Posterior vena cava (tissue), 2 donors: ENCODE measurements at regions of chr20 and their contacts with region 1.

Region 1: DNA sequence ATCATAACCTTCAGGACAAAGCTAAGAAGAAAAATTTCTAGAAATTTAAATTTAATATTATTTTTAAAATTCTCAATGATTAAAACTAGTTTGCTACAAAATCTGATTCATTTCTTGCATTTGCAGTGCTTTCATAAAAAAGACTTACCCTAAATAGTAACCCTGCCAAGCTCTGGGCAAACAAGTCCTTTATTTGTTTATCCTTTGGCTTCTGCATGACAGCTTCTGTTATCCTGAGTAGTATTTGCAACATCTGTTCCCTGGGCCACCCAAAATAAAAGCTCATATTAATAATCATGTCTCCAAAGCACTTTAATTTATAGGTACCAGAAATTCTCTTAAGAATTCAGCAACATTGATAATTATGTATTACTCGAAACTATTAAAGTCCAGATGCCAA is 101.3 kb downstream of the RALGAPA2 start:
- DNase-seq: no peak

Region 2: DNA sequence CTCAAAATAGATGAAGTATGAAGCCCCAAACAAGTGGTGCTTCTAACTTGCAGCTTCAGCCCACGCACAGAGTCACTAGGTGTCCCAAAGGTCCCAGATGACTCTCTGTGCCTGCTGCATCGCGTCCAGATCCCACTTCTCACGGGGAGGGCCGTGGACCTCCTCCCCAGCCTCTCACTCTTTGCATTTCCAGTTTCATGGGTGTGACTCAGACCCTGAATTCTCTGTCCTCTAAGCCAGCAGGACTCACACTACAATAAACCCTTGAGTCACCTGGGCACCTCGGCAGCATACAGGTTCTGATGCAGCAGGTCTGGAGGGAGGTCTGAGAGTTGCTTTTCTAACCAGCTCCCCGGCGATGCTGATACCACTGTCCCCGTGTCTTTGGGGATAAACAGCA is 967.1 kb before region 1 on chr20:
- intact Hi-C with region 1: no loop called
- DNase-seq: no peak

Region 3: DNA sequence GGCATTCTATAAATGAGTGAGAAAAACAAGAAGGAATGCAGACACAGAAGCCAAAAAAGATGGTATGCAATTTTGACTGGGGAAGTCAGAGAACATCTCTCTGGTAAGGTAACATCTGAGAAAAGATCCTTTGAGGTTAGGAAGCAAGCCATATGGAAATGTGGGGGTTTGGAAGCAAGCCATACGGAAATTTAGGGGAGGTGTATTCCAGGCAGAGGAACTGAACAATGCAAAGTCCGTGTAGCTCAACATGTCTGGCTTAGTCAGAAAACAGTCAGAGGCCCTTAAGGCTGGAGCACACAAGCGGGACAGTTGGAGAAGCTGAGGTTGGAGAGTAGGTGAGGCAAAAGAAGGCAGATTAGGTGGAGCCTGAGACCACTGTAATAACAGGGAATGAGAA is 66.0 kb after region 1 on chr20:
- intact Hi-C with region 1: no loop called
- DNase-seq: no peak

Region 4: DNA sequence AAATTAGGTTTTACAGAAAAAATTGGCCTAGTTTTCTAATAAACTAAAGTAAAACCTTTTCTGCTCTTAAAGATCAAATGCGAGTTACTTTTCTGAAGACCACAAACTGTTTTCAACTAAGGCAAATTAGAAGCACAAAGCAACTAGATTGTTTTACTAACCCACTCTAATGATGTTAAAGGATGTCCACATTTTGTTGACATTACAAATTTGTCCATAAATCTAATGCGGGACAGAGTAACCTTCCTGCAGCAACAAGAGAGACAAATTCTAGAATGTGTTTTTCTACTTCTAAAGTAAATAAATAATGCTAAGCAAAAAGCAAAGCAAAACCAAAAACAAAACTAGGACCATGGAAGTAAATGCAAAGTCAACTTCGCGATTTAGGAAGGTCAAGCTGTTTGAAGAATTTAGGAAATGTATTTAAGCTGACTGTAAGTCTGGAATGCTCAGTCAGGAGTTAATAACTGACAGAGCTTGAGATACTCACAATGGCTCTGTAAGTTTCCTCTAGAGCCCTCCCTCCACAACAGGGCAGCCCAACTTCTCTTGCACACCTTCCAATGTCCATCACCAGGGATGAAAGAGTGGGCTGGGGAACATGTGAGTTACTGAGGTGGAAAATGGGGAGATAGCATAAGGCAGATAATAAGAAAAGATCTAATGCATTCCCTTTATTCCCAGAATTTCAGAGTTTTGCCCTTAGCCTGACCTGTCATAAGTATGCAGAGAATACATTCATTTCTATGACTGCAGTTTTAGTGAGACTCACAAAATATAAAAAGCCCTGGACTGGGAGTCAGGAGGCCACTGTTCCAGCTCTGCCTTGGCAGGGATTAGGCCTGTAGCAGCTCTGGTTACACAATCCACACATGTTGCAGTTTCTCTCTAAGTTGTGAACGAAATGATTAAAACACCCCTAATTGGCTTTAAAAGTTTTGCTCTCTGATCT is 1814.5 kb after region 1 on chr20:
- intact Hi-C with region 1: loop called in 1 of 2 experiments (anchors 5 kb)
- DNase-seq: no peak